Left ventricle myocardium superior (tissue), 1 donor: ENCODE measurements at regions of chr2 and their contacts with region 1.

Region 1: GRCh38 chr2:42828487-42829425 is 36.4 kb upstream of the HAAO start:
- DNase-seq: peak; percentile 85
- ATAC-seq: peak; percentile 93

Region 2: DNA sequence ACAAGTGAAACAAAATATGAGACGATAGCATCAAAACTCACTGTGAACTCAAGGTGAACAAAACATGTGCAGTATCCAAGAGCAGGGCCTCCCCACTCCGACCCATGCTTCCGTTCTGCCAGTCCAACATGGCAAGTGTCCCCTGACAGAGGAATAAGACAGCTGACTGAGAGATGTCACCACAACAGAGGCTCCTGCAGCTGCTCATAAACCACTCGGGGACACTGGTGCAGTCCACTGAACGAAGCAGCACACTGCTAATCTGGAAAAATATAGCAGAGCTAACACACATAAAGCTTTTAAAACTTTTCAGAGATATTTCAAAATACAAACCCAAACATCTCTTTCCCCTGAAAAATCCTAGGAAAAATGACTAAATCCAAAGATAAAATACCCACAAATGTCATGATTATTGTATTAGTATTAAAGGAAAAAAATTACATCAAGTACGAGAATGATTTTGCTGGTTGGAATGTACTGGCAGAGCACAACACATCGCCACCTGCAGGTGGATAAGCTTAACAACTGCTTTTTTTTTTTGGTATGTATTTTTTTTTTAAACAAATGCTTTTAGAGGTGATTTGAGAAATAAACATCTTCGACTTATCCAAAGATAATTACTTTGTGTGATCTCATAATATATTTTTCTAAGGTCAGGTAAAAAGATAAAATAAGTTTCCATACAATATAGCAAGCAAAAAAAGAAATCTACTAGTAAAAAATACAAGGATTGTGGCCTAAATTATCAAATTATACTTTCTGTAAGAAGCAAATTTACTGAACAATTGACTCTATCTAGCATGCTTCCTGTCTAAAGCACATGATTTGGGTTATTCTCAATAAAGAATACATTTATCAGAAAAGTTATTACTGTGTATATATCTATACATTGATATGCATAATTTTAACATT is 748.5 kb after region 1 on chr2:
- intact Hi-C with region 1: loop called (anchors 10 kb)
- DNase-seq: no peak
- ATAC-seq: peak; percentile 32